Heart left ventricle (tissue), 16 donors: ENCODE measurements at regions of chr11 and their contacts with region 1.

Region 1: GRCh38 chr11:128831174-128832120 is 35.6 kb downstream of the KCNJ1 start:
- DNase-seq: peak; percentile 68 to 89 (median 79)
- ATAC-seq: peak; percentile 32 to 79 (median 74)
- H3K4me3 ChIP-seq: peak overlapping the region in 7 of 12 donors; percentile 3 to 37 (median 28)
- H3K27ac ChIP-seq: peak overlapping the region in 3 of 12 donors; percentile 2 to 42 (median 28)
- H3K4me1 ChIP-seq: peaks cover 0 to 41% (median 18%) of the 10 kb centered on the region in 12 donors
- H3K27me3 ChIP-seq: no peaks in the 10 kb centered on the region
- CTCF ChIP-seq: peak; percentile 84 to 95 (median 92)
- POLR2A ChIP-seq: no peak

Region 2: GRCh38 chr11:128157423-128158298 is 673.8 kb before region 1 on chr11:
- intact Hi-C with region 1: loop called in 3 of 10 experiments (anchors 5 kb)
- DNase-seq: peak in 2 of 5 donors; percentile 25 to 37
- ATAC-seq: peak; percentile 58 to 84 (median 82)
- H3K4me3 ChIP-seq: peak overlapping the region in 6 of 12 donors; percentile 16 to 34 (median 26)
- H3K27ac ChIP-seq: no peak overlapping the region
- H3K4me1 ChIP-seq: peaks cover 0 to 11% (median 0%) of the 10 kb centered on the region in 12 donors
- H3K27me3 ChIP-seq: no peaks in the 10 kb centered on the region
- CTCF ChIP-seq: peak; percentile 71 to 95 (median 88)
- POLR2A ChIP-seq: no peak

Region 3: GRCh38 chr11:128279866-128280265 is 551.6 kb before region 1 on chr11:
- intact Hi-C with region 1: loop called in 2 of 10 experiments (anchors 5 to 10 kb)
- DNase-seq: no peak
- ATAC-seq: no peak
- H3K4me3 ChIP-seq: no peak overlapping the region
- H3K27ac ChIP-seq: no peak overlapping the region
- H3K4me1 ChIP-seq: no peaks in the 10 kb centered on the region
- H3K27me3 ChIP-seq: no peaks in the 10 kb centered on the region
- CTCF ChIP-seq: no peak
- POLR2A ChIP-seq: no peak

Region 4: GRCh38 chr11:128472128-128473089 is 359.0 kb before region 1 on chr11:
- intact Hi-C with region 1: loop called in 1 of 10 experiments (anchors 10 kb)
- DNase-seq: no peak
- ATAC-seq: peak in 1 of 4 donors; percentile 9
- H3K4me3 ChIP-seq: peak overlapping the region in 1 of 12 donors; percentile 6
- H3K27ac ChIP-seq: peak overlapping the region in 7 of 12 donors; percentile 0 to 83 (median 35)
- H3K4me1 ChIP-seq: peaks cover 17 to 100% (median 90%) of the 10 kb centered on the region in 12 donors
- H3K27me3 ChIP-seq: no peaks in the 10 kb centered on the region
- CTCF ChIP-seq: no peak
- POLR2A ChIP-seq: no peak

Region 5: GRCh38 chr11:128488471-128488870 is 343.0 kb before region 1 on chr11:
- intact Hi-C with region 1: no loop called
- DNase-seq: no peak
- ATAC-seq: peak; percentile 48 to 93 (median 72)
- H3K4me3 ChIP-seq: no peak overlapping the region
- H3K27ac ChIP-seq: peak overlapping the region in 10 of 12 donors; percentile 4 to 74 (median 54)
- H3K4me1 ChIP-seq: peaks cover 16 to 90% (median 73%) of the 10 kb centered on the region in 12 donors
- H3K27me3 ChIP-seq: no peaks in the 10 kb centered on the region
- CTCF ChIP-seq: no peak
- POLR2A ChIP-seq: no peak

Region 6: DNA sequence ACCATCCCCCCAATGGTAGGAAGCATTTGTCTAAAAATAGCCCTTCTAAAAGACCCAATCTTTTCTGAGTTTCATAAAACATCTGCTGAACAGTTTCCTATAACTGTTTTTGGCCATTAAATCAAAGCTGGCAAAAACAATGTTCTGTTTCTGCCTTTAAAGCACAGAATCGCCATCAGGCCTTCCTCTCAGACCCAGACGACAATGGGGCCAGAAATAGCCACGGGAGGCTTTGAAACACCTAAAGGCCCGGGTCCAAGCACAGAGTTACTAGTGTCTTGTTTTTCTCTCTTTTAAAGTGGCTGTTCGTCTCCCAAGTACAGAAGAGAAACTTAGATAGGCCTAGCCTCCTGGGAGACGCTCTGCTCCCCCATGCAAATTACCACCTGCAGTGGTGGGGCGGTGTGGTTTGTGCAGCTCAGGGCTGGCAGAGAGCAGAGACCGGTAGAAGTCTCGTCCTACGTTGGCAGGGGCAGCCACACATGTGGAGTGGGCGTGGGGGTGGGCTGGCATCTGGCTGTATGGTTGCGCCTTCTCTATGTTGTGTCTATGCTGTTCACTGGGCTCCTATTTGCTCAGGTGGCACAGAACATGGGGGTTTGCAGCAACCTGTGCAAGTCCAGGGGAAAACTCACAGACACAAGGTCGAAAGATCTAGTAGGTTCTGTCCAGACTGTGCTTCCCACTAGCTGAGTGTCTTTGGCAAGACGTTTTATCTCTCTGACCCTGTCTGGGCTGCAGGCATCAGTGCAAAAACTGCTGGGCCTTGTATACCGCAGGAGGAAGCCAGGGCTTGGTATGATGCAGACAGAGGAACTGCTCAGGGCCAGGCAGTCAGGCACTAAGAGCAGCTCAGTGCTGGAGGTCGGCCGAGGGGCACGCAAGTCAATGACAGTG is 220.5 kb before region 1 on chr11:
- intact Hi-C with region 1: no loop called
- DNase-seq: peak in 1 of 5 donors; percentile 66
- ATAC-seq: peak; percentile 11 to 72 (median 54)
- H3K4me3 ChIP-seq: peak overlapping the region in 2 of 12 donors; percentile 14 to 16
- H3K27ac ChIP-seq: peak overlapping the region in 11 of 12 donors; percentile 34 to 76 (median 45)
- H3K4me1 ChIP-seq: peaks cover 0 to 47% (median 26%) of the 10 kb centered on the region in 12 donors
- H3K27me3 ChIP-seq: no peaks in the 10 kb centered on the region
- CTCF ChIP-seq: no peak
- POLR2A ChIP-seq: no peak

Region 7: GRCh38 chr11:128624269-128625175 is 206.9 kb before region 1 on chr11:
- intact Hi-C with region 1: loop called in 1 of 10 experiments (anchors 5 kb)
- DNase-seq: no peak
- ATAC-seq: no peak
- H3K4me3 ChIP-seq: no peak overlapping the region
- H3K27ac ChIP-seq: peak overlapping the region in 1 of 12 donors; percentile 81
- H3K4me1 ChIP-seq: peaks cover 0 to 76% (median 14%) of the 10 kb centered on the region in 12 donors
- H3K27me3 ChIP-seq: no peaks in the 10 kb centered on the region
- CTCF ChIP-seq: no peak
- POLR2A ChIP-seq: no peak

Region 8: DNA sequence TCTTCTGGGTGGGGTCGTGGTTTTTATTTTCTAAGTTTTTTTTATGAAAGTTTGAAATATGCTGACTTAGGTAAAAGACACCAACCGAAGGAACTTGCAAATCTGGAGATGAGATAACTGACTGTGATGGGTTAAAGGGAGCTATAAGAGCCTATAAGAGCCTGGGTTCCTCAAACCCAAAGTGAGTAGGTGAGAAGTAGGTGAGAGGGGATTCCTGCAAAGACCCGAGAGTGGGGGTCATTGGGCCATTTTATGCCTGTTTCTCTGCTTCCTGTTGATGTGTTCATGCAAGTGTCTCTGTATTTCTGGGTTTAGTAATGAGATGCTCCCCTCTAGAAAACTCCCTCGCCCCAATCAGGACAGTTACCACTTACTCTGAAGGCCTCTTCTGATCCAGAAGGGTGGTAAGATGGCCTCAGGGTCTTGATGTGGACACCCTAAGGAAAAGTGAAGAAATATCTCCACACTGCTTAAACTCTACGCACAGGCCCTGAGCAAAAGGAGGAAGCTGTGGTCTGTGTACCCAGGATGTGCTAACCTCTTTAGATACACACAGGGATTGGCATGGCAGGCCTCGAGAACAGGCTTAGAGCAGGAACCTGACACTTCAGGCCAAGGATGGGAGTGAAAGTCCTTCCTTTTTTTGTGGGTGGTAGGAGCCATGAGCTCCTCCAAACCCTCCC is 135.8 kb before region 1 on chr11:
- intact Hi-C with region 1: loop called in 2 of 10 experiments (anchors 5 kb)
- DNase-seq: peak in 2 of 5 donors; percentile 60
- ATAC-seq: peak; percentile 7 to 66 (median 34)
- H3K4me3 ChIP-seq: peak overlapping the region; percentile 67 to 97 (median 85)
- H3K27ac ChIP-seq: peak overlapping the region; percentile 89 to 98 (median 96)
- H3K4me1 ChIP-seq: peaks cover 0 to 70% (median 34%) of the 10 kb centered on the region in 12 donors
- H3K27me3 ChIP-seq: peaks cover 0 to 50% (median 0%) of the 10 kb centered on the region in 9 donors
- CTCF ChIP-seq: no peak
- POLR2A ChIP-seq: no peak

Region 9: DNA sequence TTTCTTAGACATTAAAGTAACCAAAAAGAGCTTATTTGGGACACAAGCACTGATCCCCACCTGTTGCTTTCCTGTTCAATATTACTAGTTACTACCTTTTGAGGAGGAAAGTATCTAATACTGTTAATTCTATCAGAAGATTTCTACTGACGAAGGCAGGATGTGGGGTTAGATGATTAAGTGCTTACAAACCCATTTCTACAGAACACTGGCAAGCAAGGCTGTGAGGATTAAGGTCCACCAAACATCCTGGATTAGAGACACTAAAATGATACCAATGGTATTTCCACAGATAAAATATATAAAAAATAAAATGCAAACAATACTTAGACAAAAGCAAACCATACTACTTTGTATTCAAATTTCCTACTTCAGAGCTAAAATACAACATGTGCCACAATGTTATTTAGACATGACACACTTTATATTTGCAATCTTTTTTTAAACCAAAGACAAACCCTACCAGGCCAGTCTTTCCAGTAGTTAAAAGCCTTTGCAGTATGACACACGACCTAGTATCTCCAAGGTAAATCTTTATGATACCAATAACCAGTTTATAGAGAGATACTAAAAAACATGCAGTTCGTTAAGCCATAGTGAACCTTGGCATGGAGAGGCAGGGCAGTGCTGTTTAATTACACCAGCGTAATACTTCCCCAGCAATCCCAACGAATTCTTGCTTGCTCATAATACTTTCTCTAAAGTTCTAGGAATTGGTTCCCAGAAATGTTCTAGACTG is 182.5 kb after region 1 on chr11:
- intact Hi-C with region 1: no loop called
- DNase-seq: no peak
- ATAC-seq: no peak
- H3K4me3 ChIP-seq: no peak overlapping the region
- H3K27ac ChIP-seq: no peak overlapping the region
- H3K4me1 ChIP-seq: no peaks in the 10 kb centered on the region
- H3K27me3 ChIP-seq: no peaks in the 10 kb centered on the region
- CTCF ChIP-seq: no peak
- POLR2A ChIP-seq: no peak